ENCODE measurements at regions of chr19 and their contacts with region 1.

Region 1: GRCh38 chr19:4524808-4525562 is 6.7 kb upstream of the PLIN4 start:
- H3K4me3 ChIP-seq: no peak overlapping the region
- H3K27ac ChIP-seq: no peak overlapping the region
- H3K4me1 ChIP-seq: no peaks in the 10 kb centered on the region
- CTCF ChIP-seq: peak; percentile 74

Region 2: GRCh38 chr19:4390567-4391305 is 134.2 kb before region 1 on chr19:
- CTCF ChIA-PET with region 1: no interaction called
- POLR2A ChIA-PET with region 1: no interaction called
- H3K4me3 ChIP-seq: no peak overlapping the region
- H3K27ac ChIP-seq: peak overlapping the region; percentile 32
- H3K4me1 ChIP-seq: peaks cover 13% of the 10 kb centered on the region
- CTCF ChIP-seq: no peak

Region 3: GRCh38 chr19:4510435-4511194 is 14.4 kb before region 1 on chr19:
- CTCF ChIA-PET with region 1: interaction called, 24 read pairs
- POLR2A ChIA-PET with region 1: interaction called, 3 read pairs
- H3K4me3 ChIP-seq: no peak overlapping the region
- H3K27ac ChIP-seq: no peak overlapping the region
- H3K4me1 ChIP-seq: no peaks in the 10 kb centered on the region
- CTCF ChIP-seq: no peak

Region 4: GRCh38 chr19:4534836-4535658 is 10.1 kb after region 1 on chr19 and contains the start of gene PLIN5:
- CTCF ChIA-PET with region 1: interaction called, 72 read pairs
- POLR2A ChIA-PET with region 1: interaction called, 8 read pairs
- H3K4me3 ChIP-seq: no peak within 1 kb of the TSS
- H3K27ac ChIP-seq: no peak within 1 kb of the TSS
- H3K4me1 ChIP-seq: no peaks in the 10 kb centered on the region
- CTCF ChIP-seq: no peak